ENCODE measurements at regions of chr6 and their contacts with region 1.

Region 1: DNA sequence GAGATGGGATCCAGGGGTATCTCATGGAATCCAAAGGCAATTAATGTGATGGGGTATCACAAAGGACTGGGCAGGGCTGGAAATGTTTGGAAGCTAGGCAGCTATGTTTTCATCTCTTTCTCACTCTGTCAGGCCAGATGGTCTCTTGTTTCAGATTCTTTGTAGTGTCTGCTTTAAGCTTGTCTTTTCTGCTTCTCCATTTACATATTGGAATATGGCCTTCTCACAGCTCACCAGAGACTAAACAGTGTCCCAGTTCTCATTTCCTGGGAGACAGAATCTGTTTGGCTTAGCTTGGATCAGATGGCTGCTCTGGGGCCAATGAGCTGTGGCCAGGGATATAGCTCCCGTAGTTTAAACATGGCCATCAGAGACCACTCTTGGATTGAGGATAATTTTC is 78.9 kb downstream of the SLC35F1 start:
- DNase-seq: no peak
- H3K4me3 ChIP-seq: no peak overlapping the region
- H3K27ac ChIP-seq: no peak overlapping the region
- H3K4me1 ChIP-seq: no peaks in the 10 kb centered on the region
- H3K27me3 ChIP-seq: no peaks in the 10 kb centered on the region
- CTCF ChIP-seq: no peak
- POLR2A ChIP-seq: no peak

Region 2: GRCh38 chr6:117817499-117817898 is 168.4 kb before region 1 on chr6:
- intact Hi-C with region 1: no loop called
- DNase-seq: no peak
- H3K4me3 ChIP-seq: no peak overlapping the region
- H3K27ac ChIP-seq: no peak overlapping the region
- H3K4me1 ChIP-seq: no peaks in the 10 kb centered on the region
- H3K27me3 ChIP-seq: no peaks in the 10 kb centered on the region
- CTCF ChIP-seq: no peak
- POLR2A ChIP-seq: no peak

Region 3: DNA sequence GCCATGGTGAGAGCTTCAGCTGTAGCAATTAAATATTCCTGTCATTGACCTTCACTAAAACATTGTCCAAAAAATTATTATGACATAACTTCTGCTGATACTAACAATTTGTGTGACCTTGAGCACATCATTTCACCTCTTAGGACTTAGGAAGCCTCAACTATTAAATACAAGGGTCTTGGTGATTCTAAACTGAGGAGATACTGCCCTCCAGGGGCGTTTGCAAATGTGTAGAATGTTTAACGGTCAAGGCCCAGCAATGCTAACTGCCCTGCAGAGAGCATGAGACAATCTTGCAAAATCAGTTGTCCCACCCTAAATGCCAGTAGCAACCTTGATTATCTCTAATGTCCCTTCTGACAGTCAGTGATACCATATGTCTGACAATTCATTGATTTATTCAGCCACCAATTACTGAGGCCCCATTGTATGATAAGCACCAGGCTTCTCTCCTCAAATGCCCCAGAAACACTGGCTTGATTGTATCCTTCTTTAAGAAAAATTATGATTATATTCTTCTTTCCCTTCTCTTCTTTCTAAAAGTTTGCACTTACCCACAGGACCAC is 278.1 kb after region 1 on chr6:
- intact Hi-C with region 1: loop called (anchors 10 kb)
- DNase-seq: no peak
- H3K4me3 ChIP-seq: no peak overlapping the region
- H3K27ac ChIP-seq: no peak overlapping the region
- H3K4me1 ChIP-seq: no peaks in the 10 kb centered on the region
- H3K27me3 ChIP-seq: no peaks in the 10 kb centered on the region
- CTCF ChIP-seq: peak in 5 of 11 experiments; percentile 9 to 35 (median 24)
- POLR2A ChIP-seq: no peak

Measured in spleen (tissue), 13 donors.